PC-9 (cell line): ENCODE measurements at regions of chr17 and their contacts with region 1.

Region 1: GRCh38 chr17:40915199-40915661 is 22.2 kb downstream of the KRT23 start:
- DNase-seq: peak in 1 of 2 experiments; percentile 99
- H3K4me3 ChIP-seq: no peak overlapping the region
- H3K27ac ChIP-seq: peak overlapping the region; percentile 99
- H3K4me1 ChIP-seq: peaks cover 74% of the 10 kb centered on the region
- H3K27me3 ChIP-seq: no peaks in the 10 kb centered on the region
- CTCF ChIP-seq: no peak

Region 2: DNA sequence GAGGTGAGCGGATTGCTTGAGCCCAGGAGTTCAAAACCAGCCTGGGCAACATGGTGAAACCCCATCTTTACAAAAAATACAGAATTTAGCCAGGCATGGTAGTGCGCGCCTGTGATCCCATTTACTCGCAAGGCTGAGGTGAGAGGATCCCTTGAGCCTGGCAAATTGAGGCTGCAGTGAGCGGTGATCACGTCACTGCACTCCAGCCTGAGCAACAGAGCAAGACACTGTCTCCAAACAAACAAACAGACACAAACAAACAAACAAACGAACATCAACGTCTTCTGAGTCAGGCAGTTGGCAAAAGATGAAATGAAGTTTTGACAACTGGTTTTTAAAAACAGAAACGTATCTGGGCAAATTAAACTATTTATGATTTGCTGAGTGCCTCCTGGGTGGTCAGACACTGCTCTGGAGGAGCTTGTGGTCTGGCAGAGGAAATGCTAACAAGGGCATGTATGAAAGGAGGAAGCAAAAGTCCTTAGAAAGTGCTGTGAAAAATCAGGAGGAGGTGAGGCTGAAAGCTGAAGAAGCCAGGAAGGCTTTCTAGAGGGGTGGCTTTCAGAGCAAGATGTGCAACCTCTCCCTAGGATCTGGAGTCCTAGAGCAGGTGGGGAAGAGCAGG is 20.0 kb before region 1 on chr17:
- CTCF ChIA-PET with region 1: no interaction called
- POLR2A ChIA-PET with region 1: no interaction called
- intact Hi-C with region 1: no loop called
- DNase-seq: no peak
- H3K4me3 ChIP-seq: no peak overlapping the region
- H3K27ac ChIP-seq: no peak overlapping the region
- H3K4me1 ChIP-seq: 0 out of 2 replicates have a peak, but pooled peaks cover 4% of the 10 kb centered on the region
- H3K27me3 ChIP-seq: no peaks in the 10 kb centered on the region
- CTCF ChIP-seq: no peak

Region 3: GRCh38 chr17:40956401-40957254 is 41.4 kb after region 1 on chr17:
- CTCF ChIA-PET with region 1: interaction called, 3 read pairs
- POLR2A ChIA-PET with region 1: no interaction called
- intact Hi-C with region 1: loop called (anchors 1 kb)
- DNase-seq: peak; percentile 33 to 100
- H3K4me3 ChIP-seq: peak overlapping the region; percentile 33; the same call in 1 of the 2 replicates
- H3K27ac ChIP-seq: peak overlapping the region; percentile 98
- H3K4me1 ChIP-seq: peaks cover 85% of the 10 kb centered on the region
- H3K27me3 ChIP-seq: no peaks in the 10 kb centered on the region
- CTCF ChIP-seq: no peak

Region 4: DNA sequence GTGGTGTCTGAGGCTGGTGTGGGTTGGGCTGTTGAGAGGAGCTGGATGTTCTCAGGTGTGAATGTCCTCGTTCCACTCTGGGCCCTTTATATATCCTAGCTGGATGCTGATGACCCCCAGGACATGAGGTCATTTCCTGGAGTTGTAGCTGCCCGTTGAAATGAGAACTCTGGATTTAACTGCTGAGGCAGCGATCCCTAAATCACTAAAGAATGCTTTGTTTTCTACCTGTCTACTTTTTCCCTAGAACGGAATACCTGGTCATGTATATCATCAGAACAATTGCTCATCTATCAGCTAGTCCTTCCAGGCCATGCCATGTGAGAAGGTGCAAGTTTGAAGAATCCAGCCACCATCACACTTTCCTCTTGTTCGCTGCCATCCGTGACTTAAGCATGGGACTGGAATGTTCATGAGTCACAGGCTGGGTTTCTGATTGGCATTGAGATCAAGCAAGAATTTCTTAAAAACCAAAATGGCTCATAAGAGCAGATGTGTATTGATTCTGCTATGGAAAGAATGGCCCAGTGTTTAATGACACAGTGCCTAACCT is 144.9 kb after region 1 on chr17 and contains the start of gene KRTAP2-3:
- CTCF ChIA-PET with region 1: no interaction called
- POLR2A ChIA-PET with region 1: no interaction called
- intact Hi-C with region 1: loop called (anchors 1 kb)
- DNase-seq: peak; percentile 64 to 93
- H3K4me3 ChIP-seq: no peak within 1 kb of the TSS
- H3K27ac ChIP-seq: peak within 1 kb of the TSS; percentile 88
- H3K4me1 ChIP-seq: peaks cover 47% of the 10 kb centered on the region
- H3K27me3 ChIP-seq: no peaks in the 10 kb centered on the region
- CTCF ChIP-seq: no peak
- total RNA-seq, gene KRTAP2-3: 0.57 TPM in 1 of 2 replicates, not detected in the other

Region 5: GRCh38 chr17:41118721-41119120 is 203.5 kb after region 1 on chr17:
- CTCF ChIA-PET with region 1: no interaction called
- POLR2A ChIA-PET with region 1: interaction called, 14 read pairs
- intact Hi-C with region 1: no loop called
- DNase-seq: no peak
- H3K4me3 ChIP-seq: no peak overlapping the region
- H3K27ac ChIP-seq: no peak overlapping the region
- H3K4me1 ChIP-seq: no peaks in the 10 kb centered on the region; the same call in 1 of the 2 replicates
- H3K27me3 ChIP-seq: no peaks in the 10 kb centered on the region
- CTCF ChIP-seq: no peak

Region 6: DNA sequence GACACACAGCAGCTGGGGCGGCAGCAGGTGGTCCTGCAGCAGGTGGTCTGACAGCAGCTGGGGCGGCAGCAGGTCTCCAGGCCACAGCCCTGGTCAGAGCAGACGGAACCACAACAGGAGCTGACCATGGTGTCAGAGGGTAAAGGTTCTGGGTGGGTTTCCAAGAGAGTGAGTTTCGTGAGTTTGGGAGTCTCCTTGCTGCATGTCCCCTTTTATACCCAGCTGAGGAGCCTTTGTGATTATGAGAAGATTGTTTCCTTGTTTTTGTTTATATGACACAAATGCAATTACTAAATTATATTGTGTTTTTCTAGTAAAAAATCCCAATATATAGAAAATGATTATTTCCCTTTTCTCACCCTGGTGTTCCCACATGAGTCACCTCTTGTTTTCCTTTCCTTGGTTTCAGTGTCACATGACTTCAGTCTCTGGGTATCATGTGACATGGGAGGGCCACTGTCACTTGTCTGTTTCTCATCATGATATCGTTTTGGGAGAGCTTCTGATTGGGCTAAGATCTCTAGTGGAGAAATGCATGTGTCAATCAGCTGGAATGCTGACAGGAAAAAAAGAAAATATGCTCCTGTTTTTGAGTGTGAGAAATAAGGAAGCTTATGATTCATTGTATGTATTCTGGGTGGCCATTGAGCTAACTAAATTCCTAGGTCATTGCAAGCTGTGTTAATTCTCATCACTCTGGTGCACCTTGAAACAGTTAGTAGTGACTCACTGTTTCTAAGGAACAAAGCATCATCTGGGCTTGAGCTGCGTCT is 225.3 kb after region 1 on chr17 and contains the start of gene KRTAP4-6:
- CTCF ChIA-PET with region 1: no interaction called
- POLR2A ChIA-PET with region 1: no interaction called
- intact Hi-C with region 1: loop called (anchors 1 kb)
- DNase-seq: peak; percentile 24 to 96
- H3K4me3 ChIP-seq: no peak within 1 kb of the TSS
- H3K27ac ChIP-seq: peak within 1 kb of the TSS; percentile 94
- H3K4me1 ChIP-seq: peaks cover 17% of the 10 kb centered on the region
- H3K27me3 ChIP-seq: no peaks in the 10 kb centered on the region
- CTCF ChIP-seq: no peak
- total RNA-seq, gene KRTAP4-6: not detected in 2 replicates